ENCODE measurements at regions of chr6 and their contacts with region 1.

Region 1: GRCh38 chr6:436308-437036 is 44.9 kb downstream of the IRF4 start:
- DNase-seq: peak in 1 of 4 experiments; percentile 20
- ATAC-seq: peak; percentile 38
- H3K4me3 ChIP-seq: no peak overlapping the region
- H3K27ac ChIP-seq: no peak overlapping the region
- H3K4me1 ChIP-seq: peaks cover 0 to 7% of the 10 kb centered on the region in 2 experiments; a peak in 2 of 5 replicates
- H3K27me3 ChIP-seq: peaks cover 38 to 73% of the 10 kb centered on the region in 2 experiments
- CTCF ChIP-seq: no peak
- EP300 ChIP-seq: no peak
- POLR2A ChIP-seq: no peak
- RAD21 ChIP-seq: no peak

Region 2: GRCh38 chr6:446418-447366 is 10.2 kb after region 1 on chr6:
- CTCF ChIA-PET with region 1: no interaction called
- POLR2A ChIA-PET with region 1: interaction called, 10 read pairs
- in situ Hi-C with region 1: no loop called
- intact Hi-C with region 1: no loop called
- DNase-seq: no peak
- ATAC-seq: peak; percentile 43
- H3K4me3 ChIP-seq: no peak overlapping the region
- H3K27ac ChIP-seq: no peak overlapping the region
- H3K4me1 ChIP-seq: peaks cover 0 to 6% of the 10 kb centered on the region in 2 experiments; a peak in 1 of 5 replicates
- H3K27me3 ChIP-seq: peaks cover 40 to 88% of the 10 kb centered on the region in 2 experiments
- CTCF ChIP-seq: no peak
- EP300 ChIP-seq: no peak
- POLR2A ChIP-seq: no peak
- RAD21 ChIP-seq: no peak

Measured in K562 (cell line).